MCF 10A (cell line): ENCODE measurements at regions of chr13 and their contacts with region 1.

Region 1: DNA sequence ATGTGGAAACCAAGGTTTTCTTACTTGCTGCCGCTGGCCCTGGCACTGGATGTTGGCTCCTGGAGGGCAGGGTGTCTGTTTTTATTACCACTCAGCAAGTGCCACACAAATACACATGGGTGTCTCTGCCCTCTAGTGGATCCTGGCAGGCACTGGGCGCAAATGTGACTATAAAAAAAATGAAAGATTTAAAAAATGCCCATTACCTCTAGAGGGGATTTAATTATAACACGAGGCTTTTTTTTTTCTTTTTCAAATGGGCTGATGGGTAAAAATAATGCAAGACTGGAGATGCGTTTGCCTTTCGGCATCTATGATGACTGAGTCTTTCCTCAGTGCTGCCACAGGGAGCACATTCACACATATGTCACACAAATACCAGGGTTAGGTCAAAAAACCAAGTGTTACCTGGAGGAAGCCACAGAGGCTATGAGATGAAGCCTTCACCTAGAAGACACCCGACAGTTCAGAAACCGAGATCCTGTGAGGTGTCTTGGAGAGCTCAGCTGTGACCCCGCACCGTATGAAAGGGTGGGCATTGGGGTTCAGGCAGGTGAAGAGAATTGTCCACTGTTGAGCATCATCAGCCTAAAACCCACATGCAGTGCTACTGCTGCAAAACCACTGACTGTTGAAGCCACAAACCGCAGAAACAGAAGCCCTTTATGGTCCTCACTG is 25.7 kb downstream of the CHAMP1 start:
- DNase-seq: peak; percentile 71
- H3K4me3 Mint-ChIP-seq: no peak overlapping the region
- H3K27ac Mint-ChIP-seq: no peak overlapping the region
- H3K4me1 Mint-ChIP-seq: peaks cover 6% of the 10 kb centered on the region
- H3K27me3 Mint-ChIP-seq: no peaks in the 10 kb centered on the region
- CTCF ChIP-seq: peak; percentile 56

Region 2: DNA sequence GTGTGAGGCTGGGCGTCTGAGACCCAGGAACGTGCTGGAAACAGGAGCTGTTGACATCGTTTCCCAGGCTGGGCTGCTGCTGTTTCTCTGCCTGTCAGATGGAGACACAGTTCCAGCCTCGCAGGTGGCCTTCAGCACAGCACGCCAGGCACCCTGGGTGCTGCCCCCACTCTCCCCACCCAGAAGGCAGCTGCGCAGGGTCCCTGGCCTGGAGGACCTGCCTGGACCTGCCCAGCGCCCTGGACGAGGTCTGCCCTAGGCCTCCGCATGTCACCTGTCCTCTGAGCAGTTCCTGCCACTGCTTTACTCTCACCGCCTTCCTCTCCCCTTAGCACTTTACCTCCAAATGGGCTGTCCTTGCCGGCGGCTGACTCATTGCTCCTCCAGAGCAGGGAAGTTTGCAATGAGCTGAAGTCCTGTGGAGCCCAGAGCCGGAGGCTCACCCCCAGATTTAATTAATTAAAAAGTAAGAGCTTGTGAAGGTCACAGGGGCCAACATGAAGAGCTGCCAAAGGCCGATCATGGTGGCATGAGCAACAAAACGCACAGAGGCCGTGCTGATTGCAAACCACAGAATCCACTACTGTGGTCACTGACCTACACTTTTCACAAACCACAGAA is 398.3 kb before region 1 on chr13:
- CTCF ChIA-PET with region 1: no interaction called
- POLR2A ChIA-PET with region 1: no interaction called
- intact Hi-C with region 1: no loop called
- DNase-seq: peak; percentile 65
- H3K4me3 Mint-ChIP-seq: no peak overlapping the region
- H3K27ac Mint-ChIP-seq: no peak overlapping the region
- H3K4me1 Mint-ChIP-seq: peaks cover 6% of the 10 kb centered on the region
- H3K27me3 Mint-ChIP-seq: no peaks in the 10 kb centered on the region
- CTCF ChIP-seq: no peak

Region 3: DNA sequence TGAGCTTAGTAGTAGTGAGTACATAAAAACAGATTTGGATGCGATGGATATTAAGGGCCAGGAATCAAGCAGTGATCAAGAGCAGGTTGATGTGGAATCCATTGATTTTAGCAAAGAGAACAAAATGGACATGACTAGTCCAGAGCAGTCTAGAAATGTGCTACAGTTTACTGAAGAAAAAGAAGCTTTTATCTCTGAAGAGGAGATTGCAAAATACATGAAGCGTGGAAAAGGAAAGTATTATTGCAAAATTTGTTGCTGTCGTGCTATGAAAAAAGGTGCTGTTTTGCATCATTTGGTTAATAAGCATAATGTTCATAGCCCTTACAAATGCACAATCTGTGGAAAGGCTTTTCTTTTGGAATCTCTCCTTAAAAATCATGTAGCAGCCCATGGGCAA is 14.3 kb before region 1 on chr13:
- CTCF ChIA-PET with region 1: interaction called, 12 read pairs
- POLR2A ChIA-PET with region 1: interaction called, 4 read pairs
- intact Hi-C with region 1: no loop called
- DNase-seq: no peak
- H3K4me3 Mint-ChIP-seq: no peak overlapping the region
- H3K27ac Mint-ChIP-seq: peak overlapping the region; percentile 9
- H3K4me1 Mint-ChIP-seq: peaks cover 6% of the 10 kb centered on the region
- H3K27me3 Mint-ChIP-seq: no peaks in the 10 kb centered on the region
- CTCF ChIP-seq: no peak